Activated CD4-positive, alpha-beta T cell treated with anti-CD3 and anti-CD28 coated beads, Interleukin-2, amount 10 ng/mL, durations not matched to agents 24 days and 14 days (primary cell): ENCODE measurements at regions of chr10 and their contacts with region 1.

Region 1: DNA sequence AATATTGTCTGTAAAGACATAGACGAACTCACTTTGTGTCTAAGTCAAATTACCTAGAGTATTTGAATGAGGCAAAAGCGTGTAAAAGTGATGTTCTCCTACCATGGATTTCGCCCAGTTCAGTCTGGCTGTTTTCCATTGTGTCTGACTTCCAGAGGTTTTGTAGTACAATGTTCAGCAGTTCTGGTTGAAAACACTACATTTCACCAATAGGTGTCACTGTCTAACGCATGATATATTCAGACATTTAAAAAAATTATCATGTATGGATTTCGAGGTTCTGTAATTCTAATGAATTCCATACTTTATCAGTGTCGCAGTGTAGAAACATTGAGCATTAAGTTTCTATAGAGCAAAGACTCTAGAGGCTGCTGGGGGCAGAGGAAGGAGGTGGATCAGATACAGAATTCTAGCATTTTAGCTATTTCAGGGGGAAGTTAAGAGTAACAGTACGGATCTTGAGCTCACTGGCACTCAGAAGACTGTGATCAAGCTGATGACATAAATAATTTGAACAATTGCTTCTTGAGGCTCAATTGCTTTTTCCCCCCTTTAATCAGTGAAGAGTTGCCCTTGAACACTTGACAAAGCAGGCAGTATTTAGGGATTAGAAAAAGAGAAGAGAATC is 196.9 kb upstream of the RHOBTB1 start:
- DNase-seq: peak; percentile 57
- H3K4me3 Mint-ChIP-seq: no peak overlapping the region
- H3K27ac Mint-ChIP-seq: no peak overlapping the region
- H3K4me1 Mint-ChIP-seq: no peaks in the 10 kb centered on the region
- H3K27me3 Mint-ChIP-seq: peaks cover 15% of the 10 kb centered on the region

Region 2: GRCh38 chr10:61284222-61284890 is 143.5 kb after region 1 on chr10:
- intact Hi-C with region 1: loop called (anchors 1 kb)
- DNase-seq: peak; percentile 63
- H3K4me3 Mint-ChIP-seq: no peak overlapping the region
- H3K27ac Mint-ChIP-seq: no peak overlapping the region
- H3K4me1 Mint-ChIP-seq: peaks cover 19% of the 10 kb centered on the region
- H3K27me3 Mint-ChIP-seq: peaks cover 13% of the 10 kb centered on the region

Region 3: DNA sequence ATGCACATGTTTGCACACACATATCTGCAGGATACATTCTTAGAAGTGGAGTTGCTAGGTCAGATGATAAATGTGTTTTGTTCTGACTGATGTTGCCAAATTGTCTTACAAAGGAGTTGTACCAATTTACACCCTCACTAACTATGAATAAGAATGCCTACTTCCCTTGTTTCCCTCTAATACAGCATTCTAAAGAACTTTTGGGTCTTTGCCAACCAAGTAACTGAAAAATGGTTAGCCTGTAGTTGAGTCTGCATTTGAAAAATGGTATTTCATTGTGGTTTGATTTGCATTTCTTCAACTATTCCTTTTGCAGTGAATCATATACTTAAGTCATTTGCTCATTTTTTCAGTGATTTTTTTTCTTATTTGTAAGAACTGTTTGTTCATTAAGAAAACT is 263.9 kb after region 1 on chr10:
- intact Hi-C with region 1: no loop called
- DNase-seq: no peak
- H3K4me3 Mint-ChIP-seq: no peak overlapping the region
- H3K27ac Mint-ChIP-seq: no peak overlapping the region
- H3K4me1 Mint-ChIP-seq: no peaks in the 10 kb centered on the region
- H3K27me3 Mint-ChIP-seq: peaks cover 4% of the 10 kb centered on the region

Region 4: DNA sequence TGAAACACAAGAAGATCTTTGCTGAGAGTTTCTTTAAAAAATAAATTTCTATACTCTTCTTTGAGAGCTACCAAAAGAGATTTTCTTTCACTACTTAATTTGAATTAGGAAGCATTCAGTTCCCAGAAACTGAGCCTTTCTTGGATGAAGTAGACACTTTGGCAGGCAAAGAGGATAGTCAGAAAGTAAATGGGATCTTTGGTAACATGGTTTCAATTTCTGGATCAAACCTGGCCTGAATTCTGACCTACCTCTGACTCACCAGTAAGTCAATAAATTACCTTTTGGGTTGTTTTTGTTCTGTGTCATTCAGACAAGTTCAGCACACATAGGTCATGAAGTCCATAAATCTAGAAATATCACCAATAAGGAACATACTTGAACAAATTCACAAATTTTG is 495.1 kb after region 1 on chr10:
- intact Hi-C with region 1: no loop called
- DNase-seq: no peak
- H3K4me3 Mint-ChIP-seq: no peak overlapping the region
- H3K27ac Mint-ChIP-seq: no peak overlapping the region
- H3K4me1 Mint-ChIP-seq: no peaks in the 10 kb centered on the region
- H3K27me3 Mint-ChIP-seq: no peaks in the 10 kb centered on the region

Region 5: GRCh38 chr10:61733358-61733940 is 592.6 kb after region 1 on chr10:
- intact Hi-C with region 1: loop called (anchors 5 kb)
- DNase-seq: peak; percentile 74
- H3K4me3 Mint-ChIP-seq: no peak overlapping the region
- H3K27ac Mint-ChIP-seq: no peak overlapping the region
- H3K4me1 Mint-ChIP-seq: no peaks in the 10 kb centered on the region
- H3K27me3 Mint-ChIP-seq: peaks cover 62% of the 10 kb centered on the region